K562 (cell line): ENCODE measurements at regions of chr2 and their contacts with region 1.

Region 1: DNA sequence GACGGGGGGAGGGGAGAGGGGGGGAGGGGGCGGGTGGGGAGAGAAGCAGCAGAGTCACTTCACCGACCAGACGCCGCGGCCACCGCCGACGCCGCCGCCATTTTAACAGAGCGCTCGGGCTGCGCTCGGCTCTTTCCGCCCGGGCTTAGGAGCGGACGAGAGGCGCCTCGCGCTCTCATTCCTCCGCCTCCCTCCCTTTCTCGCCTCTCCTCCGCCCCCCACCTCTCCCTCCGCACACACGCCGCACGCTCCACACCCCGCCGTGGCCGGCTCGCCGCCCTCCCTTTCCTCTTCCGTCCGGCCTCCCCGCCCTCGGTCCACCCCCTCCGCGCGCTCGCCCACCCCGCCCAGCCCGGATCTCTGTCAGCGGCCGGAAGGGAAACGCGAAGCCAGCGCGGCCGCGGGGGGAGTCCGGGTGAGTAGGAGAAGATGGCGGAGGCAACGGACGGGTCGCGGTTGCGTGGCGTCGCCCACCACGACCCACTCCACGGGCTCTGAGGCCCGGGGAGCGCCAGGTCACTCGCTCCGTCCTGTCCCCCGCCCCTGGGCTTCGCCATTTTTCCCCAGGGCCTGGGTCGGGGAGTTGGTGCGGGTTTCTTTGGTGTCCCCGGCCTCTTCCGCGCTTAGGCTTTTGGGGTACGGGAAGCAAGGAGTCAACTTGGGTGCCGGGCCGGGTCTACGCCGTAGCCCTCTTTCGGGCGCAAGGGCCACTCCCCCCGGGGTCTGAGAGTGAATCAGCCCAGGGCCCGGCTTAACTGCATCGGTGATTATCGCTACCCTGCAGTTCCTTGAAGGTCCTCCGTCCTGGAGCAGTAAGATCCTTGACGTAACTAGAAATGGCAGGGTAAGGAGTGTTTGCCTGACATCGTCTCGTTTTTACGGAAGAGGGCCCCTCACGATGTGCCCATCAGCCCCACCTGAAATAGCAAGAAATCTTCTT is at the start of gene USP34:
- DNase-seq: peak; percentile 86 to 95 (median 90)
- ATAC-seq: peak; percentile 90
- H3K4me3 ChIP-seq: peak within 1 kb of the TSS; percentile 100
- H3K27ac ChIP-seq: peak within 1 kb of the TSS; percentile 100
- H3K4me1 ChIP-seq: peaks cover 14 to 20% of the 10 kb centered on the region in 2 experiments; a peak in 4 of 5 replicates
- H3K27me3 ChIP-seq: no peaks in the 10 kb centered on the region
- CTCF ChIP-seq: no peak
- EP300 ChIP-seq: peak; percentile 15; the same call in 1 of the 2 replicates
- POLR2A ChIP-seq: peak; percentile 93
- RAD21 ChIP-seq: 0 out of 4 replicates have a peak, but pooled peaks of 1 of the 2 experiments have one; percentile 8
- polyA plus RNA-seq, gene USP34: 19.8 to 38.7 TPM

Region 2: GRCh38 chr2:61426267-61426897 is 44.9 kb before region 1 on chr2:
- CTCF ChIA-PET with region 1: interaction called, 4 read pairs
- POLR2A ChIA-PET with region 1: interaction called, 5 read pairs
- in situ Hi-C with region 1: no loop called
- intact Hi-C with region 1: loop called (anchors 5 kb)
- DNase-seq: peak; percentile 56 to 68 (median 62)
- ATAC-seq: peak; percentile 92
- H3K4me3 ChIP-seq: no peak overlapping the region
- H3K27ac ChIP-seq: peak overlapping the region; percentile 21; the same call in 2 of the 3 replicates
- H3K4me1 ChIP-seq: peaks cover 21 to 27% of the 10 kb centered on the region in 2 experiments; a peak in 4 of 5 replicates
- H3K27me3 ChIP-seq: no peaks in the 10 kb centered on the region
- CTCF ChIP-seq: peak; percentile 60 to 87 (median 73)
- EP300 ChIP-seq: no peak
- POLR2A ChIP-seq: no peak
- RAD21 ChIP-seq: peak; percentile 5 to 64; a peak in 2 of 4 replicates

Region 3: DNA sequence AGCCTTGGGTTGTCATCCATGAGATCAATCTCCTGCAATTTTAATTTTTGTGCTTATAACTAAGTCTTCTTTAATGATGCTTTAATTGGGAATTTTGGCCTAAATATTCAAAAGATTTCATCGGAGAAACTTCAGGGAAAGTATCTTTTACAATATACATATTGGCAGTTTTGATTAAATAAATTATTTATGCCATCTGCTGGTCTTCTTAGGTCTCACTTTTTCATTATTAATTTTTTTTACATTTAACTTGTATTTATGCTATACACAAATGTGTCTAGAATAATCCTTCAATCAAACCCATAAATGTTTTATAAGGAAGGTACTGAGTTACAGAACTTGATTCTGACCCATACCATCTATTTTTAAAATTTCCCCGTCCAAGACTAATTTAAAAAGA is 162.0 kb after region 1 on chr2:
- CTCF ChIA-PET with region 1: no interaction called
- POLR2A ChIA-PET with region 1: no interaction called
- in situ Hi-C with region 1: no loop called
- intact Hi-C with region 1: no loop called
- DNase-seq: no peak
- ATAC-seq: no peak
- H3K4me3 ChIP-seq: no peak overlapping the region
- H3K27ac ChIP-seq: no peak overlapping the region
- H3K4me1 ChIP-seq: no peaks in the 10 kb centered on the region
- H3K27me3 ChIP-seq: no peaks in the 10 kb centered on the region
- CTCF ChIP-seq: no peak
- EP300 ChIP-seq: no peak
- POLR2A ChIP-seq: no peak
- RAD21 ChIP-seq: no peak

Region 4: DNA sequence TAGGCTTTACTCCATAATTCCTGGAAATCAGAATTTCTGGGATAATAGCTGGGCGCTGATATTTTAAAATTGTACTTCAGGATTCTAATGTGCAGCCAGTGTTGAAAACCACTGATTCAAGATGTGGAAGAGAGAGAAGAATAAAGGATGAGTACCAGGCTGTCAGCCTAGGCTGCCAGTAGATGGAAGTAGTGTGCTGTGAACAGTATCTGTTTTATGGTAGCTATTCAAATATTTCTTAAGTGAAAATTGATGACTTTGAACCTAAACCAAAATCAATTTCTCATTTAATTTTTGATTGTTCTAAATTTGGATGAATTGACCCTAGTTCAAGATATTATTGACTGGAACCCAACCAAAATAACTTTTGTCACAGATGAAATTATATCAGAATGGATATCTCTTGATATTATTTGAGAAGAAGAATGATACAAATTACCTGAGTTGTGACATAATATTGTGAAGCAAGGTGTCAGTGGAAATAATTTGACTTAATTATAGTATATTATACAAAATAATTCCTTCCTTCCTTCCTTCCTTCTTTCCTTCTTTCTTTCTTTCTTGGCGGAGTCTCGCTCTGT is 522.3 kb after region 1 on chr2:
- CTCF ChIA-PET with region 1: no interaction called
- POLR2A ChIA-PET with region 1: no interaction called
- in situ Hi-C with region 1: no loop called
- intact Hi-C with region 1: no loop called
- DNase-seq: peak; percentile 26 to 68 (median 41)
- ATAC-seq: peak; percentile 87
- H3K4me3 ChIP-seq: no peak overlapping the region
- H3K27ac ChIP-seq: no peak overlapping the region
- H3K4me1 ChIP-seq: peaks cover 0 to 12% of the 10 kb centered on the region in 2 experiments; a peak in 3 of 5 replicates
- H3K27me3 ChIP-seq: no peaks in the 10 kb centered on the region
- CTCF ChIP-seq: peak; percentile 55 to 91 (median 71); a peak in 5 of 6 replicates
- EP300 ChIP-seq: no peak
- POLR2A ChIP-seq: no peak
- RAD21 ChIP-seq: peak; percentile 91 to 94